Sigmoid colon (tissue), 7 donors: ENCODE measurements at regions of chr6 and their contacts with region 1.

Region 1: GRCh38 chr6:168636147-168637004 is 195.4 kb downstream of the SMOC2 start:
- DNase-seq: no peak
- H3K4me3 ChIP-seq: no peak overlapping the region
- H3K27ac ChIP-seq: no peak overlapping the region
- H3K4me1 ChIP-seq: peaks cover 0 to 48% (median 38%) of the 10 kb centered on the region in 4 donors
- H3K27me3 ChIP-seq: no peaks in the 10 kb centered on the region
- CTCF ChIP-seq: no peak
- EP300 ChIP-seq: no peak
- POLR2A ChIP-seq: no peak

Region 2: DNA sequence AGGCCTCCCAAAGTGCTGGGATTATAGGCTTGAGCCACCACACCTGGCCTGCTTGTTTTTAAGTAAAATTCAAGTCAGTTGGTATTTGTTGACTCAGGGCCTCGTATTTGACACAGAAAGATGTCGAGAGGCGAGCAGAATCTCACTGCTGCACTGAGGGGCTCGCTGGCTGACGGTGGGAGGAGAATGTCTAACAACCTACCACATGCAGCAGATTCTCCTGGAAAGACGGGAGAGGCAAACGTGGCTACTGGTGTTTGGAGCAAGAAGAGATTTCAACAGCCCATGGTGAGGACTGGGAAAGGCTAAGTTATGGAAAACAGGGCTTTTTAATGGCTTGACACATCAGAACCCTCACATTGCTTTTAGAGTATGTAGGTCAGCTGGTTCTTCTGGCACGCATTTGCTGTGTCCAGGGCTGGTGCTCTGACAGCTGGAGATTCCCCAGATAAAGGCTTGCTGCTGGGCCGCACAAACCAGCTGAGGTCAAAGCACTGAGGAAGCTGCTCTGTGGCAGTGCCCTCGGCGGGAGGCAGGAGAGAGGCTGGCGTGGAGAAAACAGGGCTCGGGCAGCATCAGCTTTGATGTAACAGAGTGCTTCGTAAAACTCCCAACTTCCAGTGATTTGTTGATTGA is 473.2 kb before region 1 on chr6:
- intact Hi-C with region 1: loop called (anchors 5 kb)
- DNase-seq: peak; percentile 92
- H3K4me3 ChIP-seq: no peak overlapping the region
- H3K27ac ChIP-seq: peak overlapping the region; percentile 32 to 86 (median 80)
- H3K4me1 ChIP-seq: peaks cover 0 to 59% (median 39%) of the 10 kb centered on the region in 4 donors
- H3K27me3 ChIP-seq: no peaks in the 10 kb centered on the region
- CTCF ChIP-seq: peak in 1 of 4 experiments; percentile 19
- EP300 ChIP-seq: peak in 3 of 4 donors; percentile 22 to 85 (median 75)
- POLR2A ChIP-seq: no peak

Region 3: DNA sequence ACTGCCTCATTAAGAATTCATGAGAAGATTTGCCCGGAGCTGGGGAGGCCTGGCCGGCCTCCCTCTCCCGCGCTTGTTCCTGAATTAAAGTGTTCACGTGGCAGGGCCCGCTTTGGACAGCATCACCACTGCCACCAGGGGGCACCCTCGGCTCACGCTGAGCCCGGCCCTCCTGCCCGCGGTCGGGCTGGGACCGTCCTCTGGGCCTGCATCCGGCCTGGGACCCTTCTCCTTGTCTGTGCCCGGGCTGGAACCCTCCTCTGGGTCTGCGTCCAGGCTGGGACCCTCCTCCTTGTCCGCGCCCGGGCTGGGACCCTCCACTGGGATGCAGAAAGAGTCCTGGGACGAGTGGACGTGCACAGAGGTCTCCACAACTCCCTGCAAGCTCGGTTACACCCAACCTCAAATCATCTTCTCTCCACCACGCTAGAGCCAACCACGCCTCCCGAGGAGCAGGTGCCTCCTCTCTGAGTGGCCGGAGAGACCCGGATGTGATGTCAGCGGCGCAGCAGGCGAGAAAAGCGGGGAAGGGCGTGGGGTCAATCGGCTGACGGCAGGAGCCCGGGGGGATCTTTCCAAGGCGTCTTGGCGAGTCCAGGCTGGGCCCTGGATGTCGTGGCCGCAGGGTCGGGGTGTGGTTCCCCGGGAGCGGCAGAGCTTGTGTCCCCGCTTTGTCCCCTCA is 265.9 kb before region 1 on chr6:
- intact Hi-C with region 1: loop called (anchors 10 kb)
- DNase-seq: peak; percentile 89
- H3K4me3 ChIP-seq: no peak overlapping the region
- H3K27ac ChIP-seq: no peak overlapping the region
- H3K4me1 ChIP-seq: peaks cover 0 to 29% (median 16%) of the 10 kb centered on the region in 4 donors
- H3K27me3 ChIP-seq: no peaks in the 10 kb centered on the region
- CTCF ChIP-seq: peak; percentile 78 to 94 (median 86)
- EP300 ChIP-seq: no peak
- POLR2A ChIP-seq: no peak

Region 4: DNA sequence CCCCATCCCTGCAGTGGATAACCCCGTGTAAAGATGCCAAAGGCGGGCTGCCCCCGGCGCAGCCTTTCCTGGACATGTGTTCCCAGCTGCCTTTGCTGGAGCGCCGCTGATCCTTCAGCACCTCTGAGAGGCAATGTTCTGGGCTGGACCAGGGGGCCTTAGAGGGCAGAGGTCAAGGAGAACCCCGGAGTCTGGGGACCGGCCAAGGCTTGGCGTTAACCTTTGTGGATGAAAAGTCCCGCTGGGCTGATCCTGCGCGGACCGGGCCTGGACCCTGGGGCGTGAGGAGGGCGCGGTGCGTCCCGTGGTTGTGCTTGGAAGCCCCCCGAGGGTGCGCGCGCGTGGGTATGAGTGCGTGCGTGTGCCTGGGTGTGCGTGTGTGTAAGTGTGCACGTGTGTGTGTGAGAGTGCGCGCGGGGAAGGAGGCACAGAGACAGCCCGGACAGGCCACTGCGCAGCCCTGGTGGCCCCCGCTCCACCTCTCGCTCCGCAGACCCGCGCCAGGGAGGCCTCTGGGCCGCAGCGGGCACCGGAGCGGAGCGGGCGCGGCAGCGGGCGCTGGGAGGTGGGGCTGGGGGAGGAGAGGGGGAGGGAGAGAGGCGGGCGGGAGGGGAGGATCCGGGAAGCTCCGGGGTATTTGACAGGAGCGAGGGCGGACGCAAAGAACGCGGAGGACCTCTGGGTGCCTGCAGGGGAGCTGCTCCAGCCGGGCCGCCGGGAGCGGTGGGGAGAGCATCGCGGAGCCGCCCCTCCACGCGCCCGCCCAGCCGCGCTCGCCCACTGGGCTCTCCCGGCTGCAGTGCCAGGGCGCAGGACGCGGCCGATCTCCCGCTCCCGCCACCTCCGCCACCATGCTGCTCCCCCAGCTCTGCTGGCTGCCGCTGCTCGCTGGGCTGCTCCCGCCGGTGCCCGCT is 195.6 kb before region 1 on chr6 and contains the start of gene SMOC2:
- intact Hi-C with region 1: loop called (anchors 5 kb)
- DNase-seq: no peak
- H3K4me3 ChIP-seq: peak within 1 kb of the TSS; percentile 49 to 75 (median 58)
- H3K27ac ChIP-seq: peak within 1 kb of the TSS; percentile 43 to 68 (median 56)
- H3K4me1 ChIP-seq: peaks cover 0 to 33% (median 24%) of the 10 kb centered on the region in 4 donors
- H3K27me3 ChIP-seq: peaks cover 0 to 16% (median 15%) of the 10 kb centered on the region in 3 donors
- CTCF ChIP-seq: no peak
- EP300 ChIP-seq: no peak
- POLR2A ChIP-seq: no peak
- total RNA-seq, gene SMOC2: 23.9 to 130 (median 52.9) TPM